Pancreas (tissue), 10 donors: ENCODE measurements at regions of chr11 and their contacts with region 1.

Region 1: DNA sequence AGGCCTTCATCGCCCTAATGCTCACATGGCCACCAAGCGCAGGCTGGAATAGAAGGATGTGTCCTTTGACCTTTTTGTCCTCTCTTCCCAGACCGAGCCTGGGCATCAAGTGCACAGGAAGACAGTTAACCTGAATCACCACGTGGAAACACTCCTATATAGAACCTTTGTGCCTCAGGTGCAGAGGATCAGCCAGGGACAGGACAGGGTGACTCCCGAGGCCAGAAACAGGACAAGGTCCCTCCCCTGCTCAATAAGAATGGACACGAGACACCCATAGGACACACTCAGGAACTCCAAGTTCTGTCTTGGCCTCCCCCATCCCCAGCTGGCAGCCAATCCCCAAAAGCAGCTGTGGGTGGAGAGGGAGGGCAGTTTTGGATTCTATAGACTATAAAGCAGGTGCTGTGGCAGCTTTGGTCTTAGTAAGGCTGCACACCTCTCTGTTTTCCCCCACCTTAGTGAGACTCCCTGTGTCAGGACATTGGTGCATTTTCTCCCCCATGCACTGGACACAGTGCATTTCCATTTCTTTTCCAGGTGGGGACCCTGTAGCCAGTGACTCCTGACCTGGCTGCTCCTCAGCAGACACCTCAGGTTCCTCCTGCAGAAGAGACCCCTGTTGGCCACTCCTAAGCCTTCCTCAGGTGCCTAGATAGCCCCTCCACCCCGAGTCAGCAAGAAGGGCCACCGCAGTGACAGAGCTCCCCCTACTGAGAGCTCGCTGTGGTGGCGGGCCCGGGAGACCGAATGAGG is 43.6 kb upstream of the POU2AF1 start:
- DNase-seq: peak; percentile 59 to 81 (median 74)
- ATAC-seq: peak; percentile 55 to 89 (median 86)
- H3K4me3 ChIP-seq: no peak overlapping the region
- H3K27ac ChIP-seq: no peak overlapping the region
- H3K4me1 ChIP-seq: peaks cover 7 to 17% (median 15%) of the 10 kb centered on the region in 3 donors
- H3K27me3 ChIP-seq: no peaks in the 10 kb centered on the region
- CTCF ChIP-seq: peak; percentile 45 to 70 (median 69)

Region 2: DNA sequence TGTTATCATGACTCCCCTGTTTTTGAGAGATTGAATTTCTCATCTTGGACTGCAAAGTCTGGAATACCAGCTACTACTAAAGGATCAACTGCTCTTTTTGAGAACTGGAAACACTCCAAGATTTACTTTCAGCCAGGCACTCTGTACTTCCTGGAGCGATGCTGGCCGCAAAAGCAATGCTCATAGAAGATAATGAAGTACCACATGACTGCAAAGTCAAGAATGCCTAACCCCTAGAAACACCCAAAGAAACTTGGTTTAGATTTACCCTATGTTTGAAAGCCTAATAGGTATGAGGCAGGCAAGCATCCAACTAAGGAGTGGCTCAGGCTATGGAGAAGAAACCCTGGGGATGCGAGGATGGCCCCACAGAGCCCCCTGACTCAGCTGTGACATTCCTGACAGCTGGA is 662.7 kb before region 1 on chr11:
- intact Hi-C with region 1: no loop called
- DNase-seq: no peak
- ATAC-seq: peak in 3 of 4 donors; percentile 25 to 68 (median 45)
- H3K4me3 ChIP-seq: no peak overlapping the region
- H3K27ac ChIP-seq: no peak overlapping the region
- H3K4me1 ChIP-seq: peaks cover 7 to 9% (median 8%) of the 10 kb centered on the region in 3 donors
- H3K27me3 ChIP-seq: no peaks in the 10 kb centered on the region
- CTCF ChIP-seq: no peak

Region 3: DNA sequence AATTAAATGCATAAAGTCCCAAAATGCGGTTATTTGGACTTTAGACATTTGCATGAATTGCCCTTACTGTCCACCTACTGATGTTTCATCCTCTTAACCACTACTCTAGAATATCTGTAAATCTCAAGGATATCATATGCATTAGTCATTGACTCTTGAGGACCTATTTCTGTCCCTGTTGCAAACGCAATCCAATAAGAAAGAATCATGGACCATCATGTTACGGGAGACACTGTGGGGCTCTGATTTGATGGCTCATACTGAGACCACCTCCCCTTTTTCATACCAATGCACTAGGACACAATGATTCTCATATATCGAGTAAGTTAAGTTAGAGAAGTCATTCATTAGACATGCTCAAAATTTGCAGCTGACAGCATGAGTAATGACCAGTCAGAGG is 162.8 kb before region 1 on chr11:
- intact Hi-C with region 1: no loop called
- DNase-seq: no peak
- ATAC-seq: no peak
- H3K4me3 ChIP-seq: no peak overlapping the region
- H3K27ac ChIP-seq: no peak overlapping the region
- H3K4me1 ChIP-seq: no peaks in the 10 kb centered on the region
- H3K27me3 ChIP-seq: no peaks in the 10 kb centered on the region
- CTCF ChIP-seq: no peak

Region 4: GRCh38 chr11:111283945-111284481 is 138.7 kb before region 1 on chr11:
- intact Hi-C with region 1: loop called (anchors 5 to 10 kb)
- DNase-seq: peak in 1 of 6 donors; percentile 68
- ATAC-seq: peak in 2 of 4 donors; percentile 41 to 73
- H3K4me3 ChIP-seq: no peak overlapping the region
- H3K27ac ChIP-seq: no peak overlapping the region
- H3K4me1 ChIP-seq: no peaks in the 10 kb centered on the region
- H3K27me3 ChIP-seq: no peaks in the 10 kb centered on the region
- CTCF ChIP-seq: no peak

Region 5: GRCh38 chr11:111367411-111368284 is 55.0 kb before region 1 on chr11:
- intact Hi-C with region 1: loop called in 1 of 3 experiments (anchors 10 kb)
- DNase-seq: no peak
- ATAC-seq: no peak
- H3K4me3 ChIP-seq: no peak overlapping the region
- H3K27ac ChIP-seq: peak overlapping the region in 3 of 4 donors; percentile 18 to 82 (median 78)
- H3K4me1 ChIP-seq: peaks cover 48 to 52% (median 48%) of the 10 kb centered on the region in 3 donors
- H3K27me3 ChIP-seq: no peaks in the 10 kb centered on the region
- CTCF ChIP-seq: no peak

Region 6: GRCh38 chr11:111494040-111494439 is 71.4 kb after region 1 on chr11:
- intact Hi-C with region 1: no loop called
- DNase-seq: no peak
- ATAC-seq: no peak
- H3K4me3 ChIP-seq: no peak overlapping the region
- H3K27ac ChIP-seq: no peak overlapping the region
- H3K4me1 ChIP-seq: no peaks in the 10 kb centered on the region
- H3K27me3 ChIP-seq: no peaks in the 10 kb centered on the region
- CTCF ChIP-seq: no peak

Region 7: DNA sequence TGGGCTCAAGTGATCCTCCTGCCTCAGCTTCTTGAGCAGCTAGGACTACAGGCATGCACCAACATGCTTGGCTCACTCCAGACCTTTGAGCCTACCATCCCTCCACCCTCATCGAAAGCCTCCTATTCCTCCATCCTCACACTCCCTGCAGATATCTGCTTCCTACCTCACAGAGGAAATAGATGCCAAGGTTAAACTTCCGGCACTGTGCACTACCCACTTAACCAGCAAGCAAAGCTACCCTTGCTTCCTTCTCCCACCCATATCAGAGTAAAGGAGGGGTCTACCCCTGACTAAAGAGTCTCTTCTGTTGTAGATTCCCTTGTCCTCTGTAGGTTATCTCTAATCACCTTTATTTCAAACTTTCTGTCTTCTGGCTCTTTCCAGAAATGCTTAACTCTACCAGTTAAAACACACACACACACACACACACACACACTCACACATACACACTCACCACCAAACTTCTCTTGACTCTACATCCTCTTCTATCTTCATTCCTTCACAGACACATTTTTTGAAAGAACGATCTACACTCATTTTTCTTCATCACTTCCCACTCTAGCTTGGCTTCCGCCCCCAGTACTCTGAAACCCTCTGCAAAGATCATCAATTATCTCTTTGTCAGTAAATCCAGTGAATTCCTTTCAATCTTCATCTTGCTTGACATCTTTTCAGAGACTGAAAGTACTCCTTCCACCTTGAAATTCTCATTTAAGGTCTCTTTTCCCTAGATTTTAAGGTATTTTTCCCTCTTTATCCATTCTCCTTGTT is 168.7 kb after region 1 on chr11:
- intact Hi-C with region 1: no loop called
- DNase-seq: no peak
- ATAC-seq: no peak
- H3K4me3 ChIP-seq: no peak overlapping the region
- H3K27ac ChIP-seq: no peak overlapping the region
- H3K4me1 ChIP-seq: peaks cover 0 to 4% (median 0%) of the 10 kb centered on the region in 3 donors
- H3K27me3 ChIP-seq: no peaks in the 10 kb centered on the region
- CTCF ChIP-seq: no peak